Natural killer cell (primary cell): ENCODE measurements at regions of chr12 and their contacts with region 1.

Region 1: DNA sequence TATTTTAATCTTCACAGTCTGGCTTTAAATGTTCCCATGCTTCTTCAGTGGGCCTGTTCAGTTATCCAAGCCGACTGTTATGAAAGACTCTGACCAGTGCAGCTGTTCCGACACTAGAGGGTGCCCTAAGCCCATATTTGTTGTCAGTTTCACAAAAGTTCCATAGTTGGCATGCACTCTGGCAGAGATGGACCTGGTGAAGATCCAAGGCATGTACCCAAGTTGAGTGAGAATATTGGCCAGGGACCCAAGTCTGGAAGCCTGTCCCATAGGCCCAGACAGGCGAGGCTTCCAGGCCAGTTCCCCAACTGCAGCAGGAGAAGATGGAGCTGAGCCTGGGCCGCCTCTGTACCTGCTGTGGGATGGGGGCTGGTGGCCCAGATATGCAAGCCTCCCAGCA is 27.4 kb upstream of the GUCY2C start:
- DNase-seq: peak; percentile 34 to 83
- ATAC-seq: peak; percentile 72 to 85 (median 84)
- H3K4me3 ChIP-seq: no peak overlapping the region
- H3K4me3 Mint-ChIP-seq: no peak overlapping the region
- H3K27ac ChIP-seq: no peak overlapping the region
- H3K27ac Mint-ChIP-seq: no peak overlapping the region
- H3K4me1 ChIP-seq: no peaks in the 10 kb centered on the region
- H3K4me1 Mint-ChIP-seq: peaks cover 0 to 5% of the 10 kb centered on the region in 2 donors
- H3K27me3 ChIP-seq: peaks cover 5% of the 10 kb centered on the region
- H3K27me3 Mint-ChIP-seq: peaks cover 26 to 33% of the 10 kb centered on the region in 2 donors
- CTCF ChIP-seq: peak; percentile 72

Region 2: DNA sequence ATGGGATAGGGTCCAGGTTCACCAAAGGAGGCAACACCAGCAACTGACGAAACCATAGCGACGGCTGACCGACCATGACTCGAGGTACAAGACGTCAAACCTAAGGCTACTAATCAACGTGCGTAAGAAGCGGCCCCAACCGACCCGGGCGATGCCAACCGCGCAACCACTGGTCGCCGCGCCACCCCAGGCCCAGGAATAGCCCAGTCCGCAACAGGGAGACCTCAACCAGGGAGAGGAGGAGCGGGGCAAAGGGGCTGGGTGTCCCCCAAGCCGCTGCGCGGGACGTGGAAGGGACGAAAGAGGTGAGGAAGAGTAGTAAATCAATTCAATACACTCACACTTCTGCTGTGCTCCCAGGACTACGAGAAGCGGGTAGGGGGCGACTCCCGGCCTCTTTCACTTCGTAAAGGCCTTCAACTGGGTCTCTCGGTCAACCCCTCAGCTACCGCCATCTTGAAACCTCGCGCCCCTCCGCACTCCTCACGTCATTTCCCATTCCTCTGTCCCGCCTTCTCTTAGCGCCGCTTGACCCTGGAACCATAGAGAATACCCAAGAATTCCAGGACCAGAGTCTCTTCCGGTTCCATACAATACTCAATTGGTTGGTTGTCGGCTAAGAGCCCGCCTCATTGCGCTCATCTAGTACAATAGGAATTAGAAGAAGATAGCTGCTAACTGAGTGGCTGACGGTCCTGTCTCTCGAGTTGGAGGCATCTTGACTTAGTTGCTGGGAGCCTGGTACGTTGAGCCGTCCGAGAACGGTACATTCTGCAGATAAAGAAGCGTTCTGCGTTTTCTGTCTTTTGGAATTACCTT is 79.5 kb after region 1 on chr12 and contains the starts of genes C12orf60 and WBP11:
- intact Hi-C with region 1: loop called (anchors 10 kb)
- DNase-seq: peak; percentile 79 to 96
- ATAC-seq: peak; percentile 88 to 98 (median 94)
- H3K4me3 ChIP-seq: peak within 1 kb of the TSS; percentile 92
- H3K4me3 Mint-ChIP-seq: no peak within 1 kb of the TSS
- H3K27ac ChIP-seq: peak within 1 kb of the TSS; percentile 98
- H3K27ac Mint-ChIP-seq: no peak within 1 kb of the TSS
- H3K4me1 ChIP-seq: peaks cover 10% of the 10 kb centered on the region
- H3K4me1 Mint-ChIP-seq: peaks cover 0 to 15% of the 10 kb centered on the region in 2 donors
- H3K27me3 ChIP-seq: no peaks in the 10 kb centered on the region
- H3K27me3 Mint-ChIP-seq: no peaks in the 10 kb centered on the region
- CTCF ChIP-seq: no peak
- total RNA-seq, gene C12orf60: 0.28 to 0.79 (median 0.33) TPM
- total RNA-seq, gene WBP11: 130 to 159 (median 134) TPM

Region 3: DNA sequence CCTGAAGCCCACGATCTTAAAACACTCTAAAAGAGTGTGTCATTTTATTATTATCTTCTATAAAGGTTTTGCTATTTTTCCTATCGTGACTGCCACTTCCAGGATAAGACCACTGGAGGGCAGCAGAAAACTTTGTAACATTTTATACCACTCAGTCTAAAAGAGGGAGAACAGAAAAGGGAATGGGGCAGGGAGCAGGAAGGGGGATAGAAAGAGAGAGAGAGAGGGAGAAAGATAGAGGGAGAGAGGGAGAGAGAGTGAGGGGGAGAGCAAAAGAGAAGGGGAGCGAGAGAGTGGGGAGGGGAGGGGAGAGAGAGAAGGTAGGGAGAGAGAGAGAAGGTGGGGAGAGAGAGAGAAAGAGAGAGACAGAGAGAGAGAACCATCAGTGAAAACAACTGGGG is 121.6 kb after region 1 on chr12:
- intact Hi-C with region 1: loop called (anchors 10 kb)
- DNase-seq: peak in 1 of 2 donors; percentile 77
- ATAC-seq: peak; percentile 62 to 81 (median 64)
- H3K4me3 ChIP-seq: no peak overlapping the region
- H3K4me3 Mint-ChIP-seq: no peak overlapping the region
- H3K27ac ChIP-seq: no peak overlapping the region
- H3K27ac Mint-ChIP-seq: peak overlapping the region in 1 of 2 donors; percentile 11
- H3K4me1 ChIP-seq: no peaks in the 10 kb centered on the region
- H3K4me1 Mint-ChIP-seq: peaks cover 0 to 5% of the 10 kb centered on the region in 2 donors
- H3K27me3 ChIP-seq: no peaks in the 10 kb centered on the region
- H3K27me3 Mint-ChIP-seq: peaks cover 0 to 16% of the 10 kb centered on the region in 2 donors
- CTCF ChIP-seq: peak; percentile 66

Region 4: GRCh38 chr12:14858513-14858912 is 134.8 kb after region 1 on chr12:
- intact Hi-C with region 1: no loop called
- DNase-seq: no peak
- ATAC-seq: no peak
- H3K4me3 ChIP-seq: no peak overlapping the region
- H3K4me3 Mint-ChIP-seq: no peak overlapping the region
- H3K27ac ChIP-seq: no peak overlapping the region
- H3K27ac Mint-ChIP-seq: no peak overlapping the region
- H3K4me1 ChIP-seq: no peaks in the 10 kb centered on the region
- H3K4me1 Mint-ChIP-seq: no peaks in the 10 kb centered on the region
- H3K27me3 ChIP-seq: no peaks in the 10 kb centered on the region
- H3K27me3 Mint-ChIP-seq: peaks cover 0 to 10% of the 10 kb centered on the region in 2 donors
- CTCF ChIP-seq: no peak

Region 5: GRCh38 chr12:15268927-15269552 is 545.3 kb after region 1 on chr12:
- intact Hi-C with region 1: loop called (anchors 2 kb)
- DNase-seq: peak in 1 of 2 donors; percentile 75
- ATAC-seq: peak; percentile 77 to 83 (median 79)
- H3K4me3 ChIP-seq: no peak overlapping the region
- H3K4me3 Mint-ChIP-seq: no peak overlapping the region
- H3K27ac ChIP-seq: no peak overlapping the region
- H3K27ac Mint-ChIP-seq: no peak overlapping the region
- H3K4me1 ChIP-seq: no peaks in the 10 kb centered on the region
- H3K4me1 Mint-ChIP-seq: no peaks in the 10 kb centered on the region
- H3K27me3 ChIP-seq: no peaks in the 10 kb centered on the region
- H3K27me3 Mint-ChIP-seq: peaks cover 2 to 11% of the 10 kb centered on the region in 2 donors
- CTCF ChIP-seq: peak; percentile 83